ENCODE measurements at regions of chr20 and their contacts with region 1.

Region 1: GRCh38 chr20:43767686-43768474 is 41.1 kb upstream of the GTSF1L start:
- DNase-seq: no peak

Region 2: GRCh38 chr20:43840382-43841070 is 72.6 kb after region 1 on chr20:
- intact Hi-C with region 1: loop called (anchors 5 kb)
- DNase-seq: no peak